Activated CD4-positive, alpha-beta T cell treated with anti-CD3 and anti-CD28 coated beads for 36 hours (primary cell): ENCODE measurements at regions of chr17 and their contacts with region 1.

Region 1: DNA sequence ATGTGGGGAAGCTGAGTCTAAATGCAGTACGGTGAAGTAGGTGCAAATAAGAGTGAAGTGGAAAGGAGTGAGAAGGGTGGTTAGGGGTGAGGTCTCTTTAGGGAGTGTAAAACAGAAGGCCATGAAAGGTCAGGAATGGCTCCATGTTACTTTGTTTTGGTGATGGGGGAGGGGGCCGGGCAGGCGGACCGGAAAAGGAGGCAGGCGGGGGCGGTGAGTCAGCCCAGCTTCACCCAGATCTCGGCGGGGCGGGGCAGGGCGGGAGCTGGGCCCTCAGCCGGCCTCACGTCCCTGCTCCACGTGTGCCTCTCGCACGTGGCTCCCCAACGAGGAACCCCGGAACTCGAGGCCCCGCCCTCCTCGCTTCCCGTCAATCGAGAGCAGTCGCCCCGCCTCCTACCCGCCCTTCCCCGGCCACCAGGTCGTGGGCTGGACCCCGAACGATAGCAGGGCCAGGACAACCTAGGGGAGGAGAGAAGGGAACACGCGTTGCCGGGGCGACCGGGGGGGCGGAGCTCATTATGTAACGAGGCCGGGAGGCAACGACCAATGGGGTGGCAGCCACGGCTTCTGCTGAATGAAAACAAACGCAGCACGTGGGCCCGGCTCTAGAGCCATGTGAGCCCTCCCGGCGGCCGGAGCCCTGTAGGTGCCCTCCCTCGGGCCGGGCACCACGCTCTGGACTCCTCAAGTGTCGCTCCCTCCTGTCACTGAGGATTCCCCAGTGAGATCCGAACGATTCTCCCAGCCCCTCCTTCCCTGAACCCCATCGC is 1.4 kb downstream of the NR1D1 start:
- DNase-seq: peak; percentile 99
- ATAC-seq: peak; percentile 59
- H3K4me3 Mint-ChIP-seq: peak overlapping the region; percentile 88
- H3K27ac Mint-ChIP-seq: peak overlapping the region; percentile 90
- H3K4me1 Mint-ChIP-seq: peaks cover 86% of the 10 kb centered on the region
- H3K27me3 Mint-ChIP-seq: no peaks in the 10 kb centered on the region

Region 2: GRCh38 chr17:39769974-39770587 is 329.0 kb before region 1 on chr17:
- CTCF ChIA-PET with region 1: interaction called, 3 read pairs
- POLR2A ChIA-PET with region 1: no interaction called
- intact Hi-C with region 1: loop called (anchors 1 to 10 kb)
- DNase-seq: peak; percentile 78
- ATAC-seq: peak; percentile 80
- H3K4me3 Mint-ChIP-seq: peak overlapping the region; percentile 7
- H3K27ac Mint-ChIP-seq: peak overlapping the region; percentile 82
- H3K4me1 Mint-ChIP-seq: peaks cover 96% of the 10 kb centered on the region
- H3K27me3 Mint-ChIP-seq: no peaks in the 10 kb centered on the region

Region 3: GRCh38 chr17:39980351-39981206 is 118.5 kb before region 1 on chr17 and contains the start of gene PSMD3:
- CTCF ChIA-PET with region 1: interaction called, 5 read pairs
- POLR2A ChIA-PET with region 1: no interaction called
- intact Hi-C with region 1: loop called in 1 of 2 experiments (anchors 1 kb)
- DNase-seq: peak; percentile 99
- ATAC-seq: peak; percentile 98
- H3K4me3 Mint-ChIP-seq: peak within 1 kb of the TSS; percentile 94
- H3K27ac Mint-ChIP-seq: peak within 1 kb of the TSS; percentile 90
- H3K4me1 Mint-ChIP-seq: peaks cover 31% of the 10 kb centered on the region
- H3K27me3 Mint-ChIP-seq: peaks cover 4% of the 10 kb centered on the region
- total RNA-seq, gene PSMD3: 141 to 146 TPM

Region 4: GRCh38 chr17:40121181-40122135 is 22.4 kb after region 1 on chr17 and contains the start of gene MSL1:
- CTCF ChIA-PET with region 1: interaction called, 8 read pairs
- POLR2A ChIA-PET with region 1: interaction called, 10 read pairs
- intact Hi-C with region 1: loop called in 1 of 2 experiments (anchors 1 kb)
- DNase-seq: peak; percentile 92
- ATAC-seq: peak; percentile 69
- H3K4me3 Mint-ChIP-seq: peak within 1 kb of the TSS; percentile 79
- H3K27ac Mint-ChIP-seq: peak within 1 kb of the TSS; percentile 57
- H3K4me1 Mint-ChIP-seq: peaks cover 29% of the 10 kb centered on the region
- H3K27me3 Mint-ChIP-seq: no peaks in the 10 kb centered on the region
- total RNA-seq, gene MSL1: 81.7 to 89.6 TPM

Region 5: DNA sequence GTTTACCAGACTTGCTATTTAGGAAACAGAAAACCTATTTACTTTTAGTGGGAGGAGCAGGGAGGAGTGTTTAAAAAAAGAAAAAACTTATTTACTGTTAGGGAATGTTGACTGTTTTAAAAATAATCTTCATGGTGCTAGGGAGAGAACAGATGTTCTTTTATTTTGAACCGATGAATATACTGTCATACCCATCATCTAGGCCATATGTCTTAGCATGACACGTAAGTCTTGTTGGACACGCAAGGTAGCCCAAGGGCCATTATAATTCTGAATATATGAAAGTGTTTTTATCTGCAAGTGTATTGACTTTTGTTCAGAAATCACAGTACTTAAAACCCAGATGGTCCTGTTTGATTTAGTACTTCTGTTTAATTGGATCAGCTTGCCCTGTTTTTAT is 131.6 kb after region 1 on chr17:
- CTCF ChIA-PET with region 1: no interaction called
- POLR2A ChIA-PET with region 1: no interaction called
- intact Hi-C with region 1: no loop called
- DNase-seq: no peak
- ATAC-seq: no peak
- H3K4me3 Mint-ChIP-seq: no peak overlapping the region
- H3K27ac Mint-ChIP-seq: no peak overlapping the region
- H3K4me1 Mint-ChIP-seq: peaks cover 5% of the 10 kb centered on the region
- H3K27me3 Mint-ChIP-seq: no peaks in the 10 kb centered on the region

Region 6: GRCh38 chr17:40287494-40288369 is 188.7 kb after region 1 on chr17 and contains the start of gene CDC6:
- CTCF ChIA-PET with region 1: no interaction called
- POLR2A ChIA-PET with region 1: no interaction called
- intact Hi-C with region 1: loop called (anchors 1 to 5 kb)
- DNase-seq: peak; percentile 99
- ATAC-seq: peak; percentile 87
- H3K4me3 Mint-ChIP-seq: peak within 1 kb of the TSS; percentile 100
- H3K27ac Mint-ChIP-seq: peak within 1 kb of the TSS; percentile 100
- H3K4me1 Mint-ChIP-seq: peaks cover 60% of the 10 kb centered on the region
- H3K27me3 Mint-ChIP-seq: no peaks in the 10 kb centered on the region
- total RNA-seq, gene CDC6: 105 to 171 TPM

Region 7: DNA sequence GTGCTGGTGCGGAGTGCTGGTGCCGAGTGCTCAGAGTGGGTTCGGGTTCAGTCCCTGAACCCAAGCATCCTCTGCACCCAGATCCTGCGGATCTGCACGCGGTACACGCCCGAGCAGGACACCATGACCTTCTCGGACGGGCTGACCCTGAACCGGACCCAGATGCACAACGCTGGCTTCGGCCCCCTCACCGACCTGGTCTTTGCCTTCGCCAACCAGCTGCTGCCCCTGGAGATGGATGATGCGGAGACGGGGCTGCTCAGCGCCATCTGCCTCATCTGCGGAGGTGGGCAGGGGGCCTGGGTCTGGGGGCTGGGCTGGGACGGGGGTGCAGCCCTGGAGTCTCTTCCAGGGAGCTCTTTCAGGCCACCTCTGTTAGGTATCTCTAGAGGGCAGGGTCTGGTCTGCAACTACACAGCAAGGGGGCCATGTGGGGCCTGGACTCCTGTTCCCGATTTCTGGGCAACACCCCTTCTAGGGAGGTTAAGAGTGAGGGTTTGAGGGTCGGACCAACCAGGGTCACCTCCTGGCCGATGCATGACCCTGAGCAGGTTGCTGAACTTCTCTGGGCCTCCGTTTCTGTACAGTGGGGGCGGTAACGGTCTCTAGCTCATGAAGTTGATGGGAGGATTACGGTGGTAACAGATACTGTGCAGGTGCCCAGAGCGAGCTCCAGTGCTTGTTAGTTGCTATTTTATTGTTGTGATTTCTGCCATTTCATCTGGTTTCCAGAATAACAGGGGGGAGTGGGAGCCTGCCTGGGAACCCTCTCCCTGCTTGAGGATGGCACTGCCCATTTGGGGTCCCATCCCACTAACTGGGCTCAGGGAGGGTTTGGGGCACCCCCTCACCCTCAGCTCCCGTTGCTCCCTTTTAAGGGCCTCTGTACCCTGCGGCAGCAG is 255.4 kb after region 1 on chr17:
- CTCF ChIA-PET with region 1: no interaction called
- POLR2A ChIA-PET with region 1: no interaction called
- intact Hi-C with region 1: no loop called
- DNase-seq: no peak
- ATAC-seq: no peak
- H3K4me3 Mint-ChIP-seq: no peak overlapping the region
- H3K27ac Mint-ChIP-seq: no peak overlapping the region
- H3K4me1 Mint-ChIP-seq: peaks cover 18% of the 10 kb centered on the region
- H3K27me3 Mint-ChIP-seq: no peaks in the 10 kb centered on the region

Region 8: DNA sequence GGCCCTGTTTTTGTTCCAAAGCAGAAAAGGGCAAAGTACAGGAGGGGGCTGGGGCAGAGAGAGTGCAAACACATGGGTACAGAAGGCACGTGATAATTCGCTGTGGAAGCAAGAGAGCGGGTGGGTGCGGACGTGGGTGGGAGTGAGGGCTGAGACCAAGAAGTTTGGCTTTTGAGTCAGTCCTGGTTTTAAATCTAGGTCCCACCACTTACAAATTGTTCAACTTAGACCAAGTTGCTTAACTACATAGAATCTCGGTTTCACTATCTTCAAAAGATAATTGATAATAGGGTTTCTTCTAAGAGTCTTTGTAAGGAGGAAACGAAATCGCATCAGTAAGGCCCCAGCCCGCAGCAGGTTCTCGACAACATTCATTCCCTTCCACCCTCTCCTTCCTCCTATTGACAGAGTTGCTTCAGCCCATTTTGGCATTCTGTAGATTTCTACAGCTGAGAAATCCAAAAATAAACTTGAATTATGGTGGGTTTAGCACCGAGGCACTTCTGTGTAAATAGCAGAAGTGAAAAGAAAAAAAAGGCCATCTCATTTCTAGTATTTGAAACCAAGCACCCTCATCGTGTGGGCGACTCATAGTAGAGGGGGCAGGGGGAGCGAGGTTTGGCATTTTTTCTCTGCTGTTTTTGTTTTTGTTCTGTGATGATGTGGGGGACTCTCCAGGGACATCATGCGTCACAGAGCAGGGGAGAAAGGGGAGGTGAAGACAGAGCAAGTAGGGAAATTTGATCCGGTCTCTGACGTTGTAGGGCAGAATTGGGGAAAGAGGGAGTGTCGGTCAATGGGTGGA is 499.8 kb after region 1 on chr17:
- CTCF ChIA-PET with region 1: no interaction called
- POLR2A ChIA-PET with region 1: no interaction called
- intact Hi-C with region 1: loop called in 1 of 2 experiments (anchors 5 kb)
- DNase-seq: peak; percentile 93
- ATAC-seq: peak; percentile 57
- H3K4me3 Mint-ChIP-seq: peak overlapping the region; percentile 65
- H3K27ac Mint-ChIP-seq: peak overlapping the region; percentile 97
- H3K4me1 Mint-ChIP-seq: peaks cover 97% of the 10 kb centered on the region
- H3K27me3 Mint-ChIP-seq: no peaks in the 10 kb centered on the region